CD4-positive, alpha-beta T cell (primary cell): ENCODE measurements at regions of chr11 and their contacts with region 1.

Region 1: DNA sequence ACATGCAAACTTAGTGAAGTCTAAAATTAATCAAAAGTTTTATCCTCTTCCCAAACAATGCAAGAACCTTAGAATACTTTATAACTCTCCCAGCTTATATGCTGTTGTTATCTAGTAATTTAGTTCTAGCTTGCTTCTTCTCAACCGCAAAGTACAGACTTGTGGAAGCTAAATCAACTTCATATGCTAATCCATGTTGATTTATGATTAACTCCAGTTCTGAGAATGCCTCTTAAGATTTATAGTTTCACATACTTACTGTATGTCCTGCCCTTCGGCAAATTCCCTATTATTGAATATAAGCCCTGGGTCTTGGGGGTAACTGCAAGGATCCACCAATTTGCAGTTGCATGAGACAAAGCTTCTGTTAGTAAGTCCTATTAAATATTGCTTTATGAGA is 17.6 kb upstream of the SLC35F2 start:
- DNase-seq: no peak
- ATAC-seq: no peak
- H3K4me3 ChIP-seq: no peak overlapping the region
- H3K4me3 Mint-ChIP-seq: no peak overlapping the region
- H3K27ac ChIP-seq: no peak overlapping the region
- H3K27ac Mint-ChIP-seq: no peak overlapping the region
- H3K4me1 ChIP-seq: no peaks in the 10 kb centered on the region
- H3K4me1 Mint-ChIP-seq: no peaks in the 10 kb centered on the region
- H3K27me3 ChIP-seq: no peaks in the 10 kb centered on the region
- H3K27me3 Mint-ChIP-seq: no peaks in the 10 kb centered on the region
- CTCF ChIP-seq: no peak

Region 2: DNA sequence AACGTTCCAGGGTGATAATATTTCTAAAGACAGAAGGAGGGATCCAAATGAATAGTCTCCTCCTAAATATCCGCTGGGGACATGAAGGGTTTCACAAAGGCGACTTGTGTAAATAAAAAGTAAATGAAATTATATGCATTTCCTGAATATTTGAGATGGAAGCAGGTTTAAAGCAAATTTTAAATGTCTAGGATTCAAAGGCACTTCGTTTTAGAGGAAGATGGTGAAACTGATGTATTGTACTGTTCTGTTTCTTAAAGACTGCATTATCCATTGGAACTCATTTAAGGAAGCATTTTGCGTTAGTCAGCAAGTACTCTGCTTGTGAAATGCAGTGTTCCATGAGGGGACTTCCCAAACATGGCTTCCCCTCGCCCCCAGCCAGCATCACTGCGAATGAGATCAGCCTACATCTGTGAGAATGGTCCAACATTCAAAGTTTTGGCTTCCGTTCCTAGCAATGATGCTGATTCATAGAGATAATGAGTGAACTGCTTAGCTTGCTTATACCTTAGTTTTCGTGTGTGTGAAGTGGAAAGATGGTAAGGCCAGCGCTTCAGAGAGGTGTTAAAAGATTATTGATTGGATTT is 53.6 kb after region 1 on chr11:
- CTCF ChIA-PET with region 1: no interaction called
- POLR2A ChIA-PET with region 1: no interaction called
- intact Hi-C with region 1: loop called in 1 of 2 experiments (anchors 10 kb)
- DNase-seq: peak in 2 of 14 experiments; percentile 51 to 56
- ATAC-seq: no peak
- H3K4me3 ChIP-seq: no peak overlapping the region
- H3K4me3 Mint-ChIP-seq: no peak overlapping the region
- H3K27ac ChIP-seq: no peak overlapping the region
- H3K27ac Mint-ChIP-seq: no peak overlapping the region
- H3K4me1 ChIP-seq: peaks cover 19% of the 10 kb centered on the region
- H3K4me1 Mint-ChIP-seq: peaks cover 10% of the 10 kb centered on the region
- H3K27me3 ChIP-seq: peaks cover 18 to 31% of the 10 kb centered on the region in 2 experiments
- H3K27me3 Mint-ChIP-seq: peaks cover 42% of the 10 kb centered on the region
- CTCF ChIP-seq: no peak

Region 3: GRCh38 chr11:108206969-108207682 is 331.0 kb after region 1 on chr11:
- CTCF ChIA-PET with region 1: no interaction called
- POLR2A ChIA-PET with region 1: no interaction called
- intact Hi-C with region 1: no loop called
- DNase-seq: no peak
- ATAC-seq: no peak
- H3K4me3 ChIP-seq: no peak overlapping the region
- H3K4me3 Mint-ChIP-seq: no peak overlapping the region
- H3K27ac ChIP-seq: no peak overlapping the region
- H3K27ac Mint-ChIP-seq: no peak overlapping the region
- H3K4me1 ChIP-seq: peaks cover 33% of the 10 kb centered on the region
- H3K4me1 Mint-ChIP-seq: peaks cover 63% of the 10 kb centered on the region
- H3K27me3 ChIP-seq: no peaks in the 10 kb centered on the region
- H3K27me3 Mint-ChIP-seq: no peaks in the 10 kb centered on the region
- CTCF ChIP-seq: no peak